Left cardiac atrium (tissue), 4 donors: ENCODE measurements at regions of chr6 and their contacts with region 1.

Region 1: GRCh38 chr6:52577022-52577777 is at the start of gene TRAM2:
- DNase-seq: peak; percentile 92
- ATAC-seq: peak; percentile 90 to 93
- total RNA-seq, gene TRAM2: 14.1 to 19.2 TPM

Region 2: DNA sequence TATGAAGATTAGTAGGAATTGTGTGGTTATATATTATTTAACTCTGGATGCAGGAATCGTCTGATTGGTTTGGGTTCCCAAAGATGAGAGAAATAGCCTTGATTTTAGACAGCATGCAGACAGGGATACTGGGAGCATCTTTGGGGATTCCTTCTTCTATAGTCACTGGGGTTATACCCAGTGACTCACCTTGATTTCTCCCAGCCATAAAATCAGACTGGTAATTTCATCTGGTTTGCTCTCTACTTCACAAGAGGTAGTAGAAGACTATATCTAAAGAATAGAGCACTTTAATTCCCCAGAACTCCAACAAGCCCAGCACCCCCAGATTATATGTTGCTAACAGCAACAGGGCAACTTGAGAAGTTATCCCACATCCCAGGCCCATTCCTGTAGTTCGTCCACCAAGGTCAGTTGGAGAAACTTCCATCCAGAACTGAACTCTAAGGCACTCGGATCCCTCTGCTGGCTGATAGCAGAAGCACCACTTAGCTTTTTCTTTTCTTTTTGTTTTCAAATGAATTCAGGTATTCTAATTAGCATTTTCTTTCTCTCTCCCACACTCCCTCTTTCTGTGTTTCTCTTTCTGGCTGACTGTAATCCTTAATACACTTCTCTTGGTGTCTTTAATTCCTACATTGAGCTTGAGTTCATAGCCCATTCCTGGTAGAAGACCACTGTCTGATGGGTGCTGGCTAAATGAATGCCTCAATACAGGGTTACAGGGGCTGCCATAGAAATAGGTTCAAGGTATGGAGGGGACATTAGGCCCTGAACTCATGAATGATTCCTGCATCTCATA is 177.5 kb before region 1 on chr6:
- intact Hi-C with region 1: no loop called
- DNase-seq: no peak
- ATAC-seq: peak; percentile 60 to 65

Region 3: DNA sequence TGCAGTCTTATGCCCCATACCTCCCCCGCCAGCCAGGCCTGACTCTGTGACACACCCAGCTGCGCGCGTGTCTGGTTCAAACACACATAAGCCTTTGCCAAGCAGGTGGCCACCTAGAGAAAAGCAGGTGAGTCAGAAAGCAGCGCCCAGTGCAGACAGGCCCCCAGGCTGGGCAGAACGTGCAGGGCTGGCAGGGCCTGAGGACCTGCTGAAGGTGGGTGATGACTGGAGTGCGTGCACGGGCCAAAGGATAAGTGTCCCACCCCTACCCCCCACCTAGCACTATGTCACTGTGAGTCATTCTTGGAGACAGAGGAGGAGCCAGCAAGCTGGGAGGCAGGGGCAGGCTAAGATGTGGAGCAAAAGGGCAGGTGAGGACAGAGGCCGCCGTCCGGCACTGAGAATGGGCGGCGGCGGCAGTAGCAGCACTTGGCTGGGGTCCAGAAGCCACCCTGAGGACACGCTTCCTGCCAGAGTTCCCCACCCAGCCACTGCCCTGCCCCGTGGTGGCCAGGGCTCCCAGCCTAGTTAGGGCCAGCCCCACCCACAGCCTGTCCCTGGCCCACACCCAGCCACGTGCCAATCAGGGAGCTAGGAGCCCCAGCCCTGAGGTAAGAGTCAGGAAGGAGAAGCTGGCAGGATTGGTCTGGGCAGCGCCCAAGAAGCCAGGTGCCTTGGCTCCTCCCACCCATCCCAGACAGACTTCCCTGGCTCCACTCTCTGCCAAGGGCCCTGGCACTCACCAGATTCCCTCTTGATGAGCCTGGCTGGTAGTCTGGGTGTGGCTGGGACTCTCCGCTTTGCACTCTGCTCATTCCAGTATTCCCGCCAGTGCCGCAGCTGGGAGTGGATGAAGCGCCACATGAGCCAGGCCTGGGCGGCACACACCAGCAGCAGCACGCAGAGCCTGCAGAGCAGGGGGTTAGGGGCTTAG is 73.1 kb before region 1 on chr6:
- intact Hi-C with region 1: loop called (anchors 5 to 10 kb)
- DNase-seq: peak; percentile 91
- ATAC-seq: peak; percentile 78 to 88

Region 4: DNA sequence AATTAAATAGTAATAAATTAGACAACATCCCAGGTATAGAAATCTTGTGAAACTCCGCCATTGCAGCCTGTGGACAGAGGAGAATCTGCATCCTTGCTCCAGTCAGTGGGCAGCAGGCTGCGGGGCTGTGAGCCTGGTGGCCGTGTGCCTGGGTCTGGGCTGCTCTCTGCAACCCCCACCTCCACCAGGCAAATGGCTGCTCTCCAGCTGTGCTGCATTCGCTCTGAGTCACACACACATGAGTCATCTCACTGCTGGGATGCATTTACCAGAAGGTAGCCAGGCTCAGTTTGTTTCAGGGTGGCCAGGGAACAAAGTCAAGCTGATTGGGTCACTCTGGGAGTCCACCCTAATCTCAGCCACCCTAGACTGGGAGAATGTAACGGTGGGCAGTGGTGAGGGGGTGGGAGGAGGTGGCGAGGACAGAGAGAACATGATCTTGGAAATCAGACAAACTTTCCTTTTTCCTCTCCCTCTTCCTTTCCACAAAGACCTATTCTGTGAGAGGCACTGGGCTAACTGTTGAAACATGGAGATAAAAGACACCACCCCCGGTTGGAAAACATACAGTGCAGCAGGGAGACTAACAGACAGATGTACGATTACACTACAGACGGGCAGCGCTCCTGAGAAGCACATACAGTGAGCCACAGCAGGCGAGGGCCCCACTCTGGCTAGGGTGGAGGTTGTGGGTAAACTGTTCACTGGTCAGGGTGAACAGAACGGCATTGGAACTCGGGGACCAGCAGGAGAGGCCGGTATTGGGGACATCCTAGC is 59.5 kb before region 1 on chr6:
- intact Hi-C with region 1: loop called in 1 of 2 experiments (anchors 5 kb)
- DNase-seq: peak; percentile 91
- ATAC-seq: peak; percentile 93 to 94

Region 5: DNA sequence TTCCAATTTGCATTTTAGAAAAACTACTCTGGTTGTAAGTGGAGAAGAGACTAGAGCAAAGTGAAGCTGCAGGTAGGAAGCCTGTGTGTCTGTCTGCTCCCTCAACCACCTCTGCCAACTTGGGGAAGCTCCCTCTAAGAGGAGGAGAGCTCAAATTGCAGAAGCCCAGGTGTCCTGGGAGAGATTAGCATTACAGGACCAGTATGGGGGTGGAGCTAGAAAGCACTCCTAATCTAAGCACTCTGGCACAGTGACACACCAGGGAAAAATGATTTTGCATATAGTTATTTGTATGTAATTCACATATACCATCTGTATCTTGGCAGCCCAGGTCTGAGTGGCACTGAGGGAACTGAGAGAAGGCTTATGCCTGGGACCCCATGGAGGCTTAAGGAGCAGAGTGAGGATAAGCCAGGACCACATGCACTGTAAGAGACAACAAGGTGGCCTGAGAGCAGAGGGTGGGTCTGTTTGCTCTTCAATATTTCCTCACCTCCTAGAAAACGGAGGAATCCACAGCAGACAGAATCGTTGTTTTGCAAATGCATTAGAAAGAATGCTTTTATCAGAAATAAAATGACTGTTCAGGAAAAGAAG is 172.5 kb after region 1 on chr6:
- intact Hi-C with region 1: no loop called
- DNase-seq: no peak
- ATAC-seq: no peak

Region 6: DNA sequence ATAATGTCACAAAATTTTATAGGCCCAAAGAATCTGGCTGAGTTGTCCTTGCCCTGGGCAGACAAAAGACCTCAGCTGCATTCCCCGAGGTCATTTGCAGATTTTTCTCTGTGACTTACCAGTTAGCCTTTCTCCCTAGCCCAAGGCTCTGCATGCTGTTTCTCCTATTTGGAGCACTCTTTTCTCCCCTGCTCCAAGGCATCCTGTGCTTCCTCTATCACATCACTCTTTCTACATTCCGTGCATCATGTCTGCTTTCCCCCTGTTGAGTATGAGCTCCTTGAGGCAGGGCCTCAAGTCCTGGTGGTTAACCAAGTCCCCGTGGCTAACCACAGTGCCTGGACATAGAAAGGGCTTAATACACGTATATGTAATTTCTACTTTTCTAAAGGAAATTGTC is 332.9 kb after region 1 on chr6:
- intact Hi-C with region 1: no loop called
- DNase-seq: no peak
- ATAC-seq: no peak